Heart left ventricle (tissue), 16 donors: ENCODE measurements at regions of chr2 and their contacts with region 1.

Region 1: DNA sequence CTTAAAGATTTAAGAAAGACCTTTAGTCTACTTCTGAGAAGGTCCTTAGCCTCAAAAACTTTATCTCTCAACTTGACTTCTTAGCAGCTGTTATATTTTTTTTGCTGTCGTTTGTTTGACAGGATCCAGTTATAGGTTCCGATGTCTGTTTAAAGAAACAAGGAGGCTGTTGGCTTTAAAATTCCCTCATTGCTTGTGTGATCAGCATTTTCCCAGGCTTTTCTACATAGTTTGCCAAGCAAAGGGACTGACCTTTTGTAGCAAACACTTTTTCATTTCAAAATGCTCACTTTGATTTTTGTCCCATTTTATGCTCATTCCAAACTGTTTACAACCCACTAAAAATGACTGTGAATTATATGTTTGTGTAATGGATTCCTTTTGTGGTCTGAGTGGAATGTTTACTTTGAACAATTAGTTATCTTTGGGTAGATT is 394.9 kb downstream of the ARHGAP15 start:
- DNase-seq: no peak
- ATAC-seq: peak in 1 of 4 donors; percentile 38
- H3K4me3 ChIP-seq: no peak overlapping the region
- H3K27ac ChIP-seq: peak overlapping the region in 11 of 12 donors; percentile 6 to 67 (median 39)
- H3K4me1 ChIP-seq: peaks cover 0 to 42% (median 5%) of the 10 kb centered on the region in 12 donors
- H3K27me3 ChIP-seq: no peaks in the 10 kb centered on the region
- CTCF ChIP-seq: no peak
- POLR2A ChIP-seq: no peak

Region 2: DNA sequence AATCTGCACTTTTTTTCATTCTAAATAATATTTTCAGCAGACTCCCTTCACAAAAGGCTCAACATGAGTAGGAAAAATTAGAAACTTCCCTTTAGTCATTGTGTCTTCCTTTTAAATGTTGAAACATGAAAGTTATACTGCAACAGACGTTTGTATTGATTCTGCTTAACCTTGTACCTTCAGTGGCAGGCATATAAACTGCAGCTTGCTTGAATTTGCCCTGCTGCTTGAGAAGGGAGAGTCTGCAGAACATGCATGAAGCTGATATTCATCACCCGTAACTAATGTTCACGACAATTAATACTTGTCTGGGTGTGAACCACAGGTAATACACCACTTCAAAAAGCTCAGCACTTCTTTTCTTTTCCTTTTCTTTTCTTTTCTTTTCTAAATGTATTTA is 1098.6 kb before region 1 on chr2:
- intact Hi-C with region 1: no loop called
- DNase-seq: no peak
- ATAC-seq: no peak
- H3K4me3 ChIP-seq: no peak overlapping the region
- H3K27ac ChIP-seq: no peak overlapping the region
- H3K4me1 ChIP-seq: no peaks in the 10 kb centered on the region
- H3K27me3 ChIP-seq: no peaks in the 10 kb centered on the region
- CTCF ChIP-seq: no peak
- POLR2A ChIP-seq: no peak

Region 3: GRCh38 chr2:143463719-143464118 is 60.4 kb before region 1 on chr2:
- intact Hi-C with region 1: no loop called
- DNase-seq: no peak
- ATAC-seq: no peak
- H3K4me3 ChIP-seq: no peak overlapping the region
- H3K27ac ChIP-seq: peak overlapping the region in 2 of 12 donors; percentile 4 to 15
- H3K4me1 ChIP-seq: no peaks in the 10 kb centered on the region
- H3K27me3 ChIP-seq: no peaks in the 10 kb centered on the region
- CTCF ChIP-seq: no peak
- POLR2A ChIP-seq: no peak

Region 4: GRCh38 chr2:143477714-143478443 is 46.3 kb before region 1 on chr2:
- intact Hi-C with region 1: no loop called
- DNase-seq: no peak
- ATAC-seq: no peak
- H3K4me3 ChIP-seq: no peak overlapping the region
- H3K27ac ChIP-seq: peak overlapping the region in 2 of 12 donors; percentile 15 to 21
- H3K4me1 ChIP-seq: peaks cover 0 to 46% (median 6%) of the 10 kb centered on the region in 12 donors
- H3K27me3 ChIP-seq: no peaks in the 10 kb centered on the region
- CTCF ChIP-seq: no peak
- POLR2A ChIP-seq: no peak

Region 5: GRCh38 chr2:143705108-143705686 is 181.1 kb after region 1 on chr2:
- intact Hi-C with region 1: loop called in 1 of 10 experiments (anchors 10 kb)
- DNase-seq: no peak
- ATAC-seq: no peak
- H3K4me3 ChIP-seq: no peak overlapping the region
- H3K27ac ChIP-seq: no peak overlapping the region
- H3K4me1 ChIP-seq: peaks cover 0 to 11% (median 0%) of the 10 kb centered on the region in 12 donors
- H3K27me3 ChIP-seq: no peaks in the 10 kb centered on the region
- CTCF ChIP-seq: no peak
- POLR2A ChIP-seq: no peak